ENCODE measurements at regions of chr12 and their contacts with region 1.

Region 1: DNA sequence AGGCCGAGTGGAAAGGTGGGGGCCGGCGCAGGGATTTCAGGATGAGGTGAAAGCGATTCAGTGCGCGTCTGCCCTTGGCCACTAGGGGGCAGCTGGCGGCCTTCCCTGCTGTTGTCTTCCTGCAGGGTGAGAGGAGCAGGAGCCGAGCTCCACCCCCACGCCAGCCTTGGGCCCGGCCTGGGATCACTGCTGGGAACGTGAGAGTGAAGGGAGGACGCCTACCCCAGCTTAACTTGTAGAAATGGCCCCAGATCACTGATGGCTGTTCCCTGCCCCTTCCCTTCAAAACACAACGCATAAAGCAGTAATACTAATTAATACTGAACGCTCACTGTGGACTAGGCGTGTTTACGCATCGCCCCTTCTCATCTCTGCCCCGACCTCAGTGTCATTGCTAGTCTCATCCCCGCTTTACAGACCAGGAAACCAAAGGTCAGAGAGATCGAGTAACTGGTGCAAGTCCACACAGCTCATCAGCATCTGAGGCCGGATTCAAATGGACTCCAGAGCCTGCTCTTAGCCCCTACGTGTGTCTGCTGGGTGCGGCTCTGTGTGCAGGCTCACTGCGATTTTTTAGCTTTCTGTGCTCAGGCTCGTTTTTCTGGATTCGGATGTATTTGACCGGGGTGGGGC is 24.3 kb downstream of the MVK start:
- DNase-seq: peak; percentile 86 to 93 (median 90)
- ATAC-seq: peak; percentile 84 to 90 (median 88)
- H3K4me3 ChIP-seq: no peak overlapping the region
- H3K27ac ChIP-seq: no peak overlapping the region
- H3K4me1 ChIP-seq: peaks cover 0 to 18% (median 6%) of the 10 kb centered on the region in 12 donors
- H3K27me3 ChIP-seq: peaks cover 0 to 2% (median 0%) of the 10 kb centered on the region in 9 donors
- CTCF ChIP-seq: peak; percentile 92 to 98 (median 96)
- POLR2A ChIP-seq: no peak

Region 2: DNA sequence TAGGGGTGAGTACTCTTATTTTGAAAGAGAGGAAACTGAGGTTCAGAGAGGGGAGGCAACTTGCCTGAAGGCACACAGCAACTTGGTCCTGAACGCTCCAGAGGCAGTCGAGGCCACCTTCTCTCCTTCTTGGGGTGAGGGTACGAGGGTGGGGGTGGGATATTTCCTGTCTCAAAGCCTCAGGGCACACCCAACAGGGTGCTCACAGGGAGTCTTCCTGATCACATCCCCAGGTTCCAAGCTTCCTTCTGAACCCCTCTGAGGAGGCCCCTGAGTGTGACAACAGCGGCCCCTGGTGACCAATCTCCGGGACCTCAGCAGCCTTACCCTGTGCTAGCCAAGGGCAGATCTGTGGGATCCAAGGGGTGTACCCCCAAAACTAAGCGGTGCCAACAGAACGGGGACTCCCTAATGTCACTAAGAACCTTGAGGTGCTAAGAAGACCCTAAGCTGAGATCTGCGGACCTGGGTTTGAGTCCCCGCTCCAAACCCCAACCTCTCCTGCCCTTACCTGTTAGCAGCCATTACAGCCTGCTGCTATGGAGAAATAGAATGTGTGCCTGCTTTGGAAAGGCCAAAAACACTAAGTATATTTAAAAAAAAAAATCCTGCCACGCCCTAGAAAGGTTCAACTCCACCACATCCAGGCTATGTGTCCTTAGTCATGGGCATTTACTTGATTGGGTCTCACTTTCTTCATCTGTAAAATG is 177.4 kb after region 1 on chr12:
- intact Hi-C with region 1: loop called (anchors 1 to 5 kb)
- DNase-seq: peak; percentile 67 to 84 (median 68)
- ATAC-seq: peak; percentile 75 to 86 (median 80)
- H3K4me3 ChIP-seq: no peak overlapping the region
- H3K27ac ChIP-seq: no peak overlapping the region
- H3K4me1 ChIP-seq: peaks cover 0 to 16% (median 0%) of the 10 kb centered on the region in 12 donors
- H3K27me3 ChIP-seq: peaks cover 0 to 2% (median 0%) of the 10 kb centered on the region in 9 donors
- CTCF ChIP-seq: peak; percentile 78 to 96 (median 86)
- POLR2A ChIP-seq: no peak